A673 (cell line): ENCODE measurements at regions of chrX and their contacts with region 1.

Region 1: DNA sequence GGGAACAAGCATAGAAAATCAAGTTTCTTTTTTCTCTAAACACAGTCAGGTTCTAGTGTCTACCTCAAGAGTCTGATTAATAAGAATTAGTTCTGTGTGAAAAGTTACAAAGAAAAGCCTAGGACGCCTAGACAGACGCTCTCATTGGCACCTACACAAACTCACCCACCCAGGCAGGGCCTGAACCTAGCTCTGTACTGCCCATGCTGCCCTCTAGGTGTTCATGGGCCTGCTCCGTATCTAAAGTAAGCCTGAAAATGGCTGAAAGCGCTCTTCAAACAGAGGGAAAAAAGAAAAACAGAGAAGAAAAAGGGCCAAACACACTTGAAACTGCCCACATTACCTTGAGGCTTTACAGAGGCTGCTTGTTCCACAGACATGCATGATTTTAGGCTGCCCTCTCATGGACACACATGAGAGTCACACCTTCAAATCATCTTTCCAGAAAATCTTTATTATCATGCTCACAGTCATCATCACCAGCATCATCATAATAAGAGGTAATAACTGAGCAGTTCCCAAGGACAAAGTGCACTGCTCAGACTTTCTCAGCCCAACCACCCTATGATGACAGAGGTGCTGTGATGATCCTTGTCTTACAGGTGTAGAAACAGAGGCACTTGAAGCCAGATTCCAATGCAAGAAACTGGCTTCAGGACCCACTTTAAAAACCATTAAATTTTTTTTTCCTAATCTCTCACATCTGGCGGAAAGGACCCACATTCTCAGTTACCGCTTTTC is 49.6 kb downstream of the MAP7D2 start:
- DNase-seq: peak; percentile 66
- H3K4me3 ChIP-seq: no peak overlapping the region
- H3K27ac ChIP-seq: no peak overlapping the region
- H3K4me1 ChIP-seq: peaks cover 7% of the 10 kb centered on the region
- H3K27me3 ChIP-seq: no peaks in the 10 kb centered on the region
- CTCF ChIP-seq: peak; percentile 65

Region 2: GRCh38 chrX:19382555-19383145 is 684.5 kb before region 1 on chrX:
- CTCF ChIA-PET with region 1: no interaction called
- POLR2A ChIA-PET with region 1: no interaction called
- intact Hi-C with region 1: loop called (anchors 5 kb)
- DNase-seq: peak; percentile 71
- H3K4me3 ChIP-seq: no peak overlapping the region
- H3K27ac ChIP-seq: no peak overlapping the region
- H3K4me1 ChIP-seq: no peaks in the 10 kb centered on the region
- H3K27me3 ChIP-seq: peaks cover 10% of the 10 kb centered on the region
- CTCF ChIP-seq: peak; percentile 80

Region 3: GRCh38 chrX:19544693-19545305 is 522.3 kb before region 1 on chrX:
- CTCF ChIA-PET with region 1: no interaction called
- POLR2A ChIA-PET with region 1: no interaction called
- intact Hi-C with region 1: loop called (anchors 2 kb)
- DNase-seq: peak; percentile 69
- H3K4me3 ChIP-seq: no peak overlapping the region
- H3K27ac ChIP-seq: no peak overlapping the region
- H3K4me1 ChIP-seq: no peaks in the 10 kb centered on the region
- H3K27me3 ChIP-seq: peaks cover 7% of the 10 kb centered on the region
- CTCF ChIP-seq: peak; percentile 86

Region 4: GRCh38 chrX:19593690-19594089 is 473.4 kb before region 1 on chrX:
- CTCF ChIA-PET with region 1: no interaction called
- POLR2A ChIA-PET with region 1: no interaction called
- intact Hi-C with region 1: loop called (anchors 10 kb)
- DNase-seq: peak; percentile 72
- H3K4me3 ChIP-seq: no peak overlapping the region
- H3K27ac ChIP-seq: no peak overlapping the region
- H3K4me1 ChIP-seq: peaks cover 6% of the 10 kb centered on the region
- H3K27me3 ChIP-seq: no peaks in the 10 kb centered on the region
- CTCF ChIP-seq: peak; percentile 64